MCF 10A (cell line): ENCODE measurements at regions of chr12 and their contacts with region 1.

Region 1: GRCh38 chr12:131882779-131883520 is 11.5 kb upstream of the ULK1 start:
- DNase-seq: no peak
- H3K4me3 Mint-ChIP-seq: peak overlapping the region; percentile 7
- H3K27ac Mint-ChIP-seq: peak overlapping the region; percentile 63
- H3K4me1 Mint-ChIP-seq: peaks cover 7% of the 10 kb centered on the region
- H3K27me3 Mint-ChIP-seq: no peaks in the 10 kb centered on the region
- CTCF ChIP-seq: no peak

Region 2: GRCh38 chr12:131860562-131861291 is 22.2 kb before region 1 on chr12:
- CTCF ChIA-PET with region 1: no interaction called
- POLR2A ChIA-PET with region 1: interaction called, 11 read pairs
- intact Hi-C with region 1: no loop called
- DNase-seq: peak; percentile 93
- H3K4me3 Mint-ChIP-seq: peak overlapping the region; percentile 59
- H3K27ac Mint-ChIP-seq: peak overlapping the region; percentile 96
- H3K4me1 Mint-ChIP-seq: peaks cover 39% of the 10 kb centered on the region
- H3K27me3 Mint-ChIP-seq: peaks cover 25% of the 10 kb centered on the region
- CTCF ChIP-seq: no peak

Region 3: DNA sequence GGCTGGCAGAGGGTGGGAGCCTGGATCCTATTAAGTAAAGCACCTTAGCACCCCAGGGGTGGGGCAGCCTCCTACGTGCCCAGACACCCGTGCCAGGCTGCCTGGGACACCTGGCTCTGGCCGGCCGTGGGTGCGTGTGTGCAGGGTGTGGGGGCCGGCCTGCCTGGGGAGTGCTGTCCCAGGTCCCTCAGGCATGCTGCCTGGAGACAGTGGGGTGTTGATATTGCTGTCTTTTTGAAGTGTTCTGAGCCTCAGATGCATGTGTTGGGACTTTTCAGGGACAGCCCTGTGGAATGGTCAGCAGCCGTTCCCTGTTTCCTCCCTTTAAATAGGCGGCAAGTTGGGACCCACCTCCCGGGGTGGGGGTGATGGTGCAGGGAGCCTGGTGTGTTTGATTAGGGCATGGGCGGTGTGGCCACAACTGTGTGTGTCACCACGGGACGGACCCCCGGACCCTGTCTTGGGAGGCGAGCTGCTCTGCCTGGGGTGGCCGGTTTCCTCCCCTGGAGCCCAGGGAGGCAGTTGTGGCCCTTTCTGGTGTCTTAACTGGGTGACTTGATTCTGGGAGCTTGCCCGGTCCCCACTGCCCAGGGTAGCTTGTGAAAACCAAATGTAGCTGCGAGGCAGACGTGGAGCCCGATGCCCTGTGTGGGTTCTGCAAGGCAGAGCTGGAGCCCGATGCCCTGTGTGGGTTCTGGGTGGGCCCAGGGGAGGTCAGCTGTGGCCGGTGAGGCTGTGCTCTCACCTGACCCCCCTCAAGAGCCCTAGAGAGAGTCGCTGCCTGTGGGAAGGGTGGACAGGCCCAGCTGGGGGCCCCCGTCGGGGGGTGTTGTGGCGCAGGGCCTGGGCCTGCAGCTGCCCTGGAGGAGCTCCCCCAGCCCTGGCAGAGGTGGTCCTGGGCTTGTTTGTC is 19.6 kb after region 1 on chr12:
- CTCF ChIA-PET with region 1: no interaction called
- POLR2A ChIA-PET with region 1: no interaction called
- intact Hi-C with region 1: no loop called
- DNase-seq: no peak
- H3K4me3 Mint-ChIP-seq: no peak overlapping the region
- H3K27ac Mint-ChIP-seq: peak overlapping the region; percentile 46
- H3K4me1 Mint-ChIP-seq: peaks cover 19% of the 10 kb centered on the region
- H3K27me3 Mint-ChIP-seq: no peaks in the 10 kb centered on the region
- CTCF ChIP-seq: no peak